Activated T-helper 2 cell treated with anti-CD3 and anti-CD28 coated beads, Interferon-gamma antibody, Interleukin-2, Interleukin-4, amounts not matched to agents 10 μg/mL and 5 μg/mL and 100 μg/mL, durations not matched to agents 14 hours and 24 hours and 36 hours (primary cell): ENCODE measurements at regions of chr16 and their contacts with region 1.

Region 1: DNA sequence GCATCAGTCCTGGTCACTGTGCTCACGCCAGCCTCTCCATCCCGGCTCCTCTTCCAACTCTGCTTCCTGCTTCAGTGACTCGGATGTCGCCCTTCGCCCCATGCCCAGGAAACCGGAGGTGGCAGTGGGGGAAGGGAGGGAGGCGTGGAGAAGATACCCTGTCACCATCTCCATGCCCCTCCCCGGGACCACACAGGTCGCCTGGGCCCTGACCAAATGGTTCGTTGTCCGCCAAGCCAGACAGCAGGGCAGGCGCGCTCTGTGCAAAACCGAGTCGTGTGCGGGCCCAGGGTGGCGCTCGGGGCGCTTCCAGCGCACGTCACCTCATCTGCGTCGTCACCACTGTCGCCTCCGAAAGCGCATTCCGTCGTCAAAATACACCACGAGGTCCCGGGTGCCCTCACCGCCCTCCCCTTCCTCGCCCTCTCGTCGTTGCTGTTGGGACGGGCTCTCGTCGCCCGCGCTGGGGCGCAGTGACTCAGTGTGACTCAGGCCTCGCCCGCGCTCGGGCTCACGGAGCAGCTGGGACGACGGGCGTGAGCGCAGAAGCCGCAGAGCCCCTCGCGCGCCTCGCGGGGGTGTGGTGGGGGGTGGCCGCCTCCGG is 39.2 kb downstream of the ZNF778 start:
- DNase-seq: peak; percentile 66
- H3K4me3 Mint-ChIP-seq: peak overlapping the region; percentile 31
- H3K27ac Mint-ChIP-seq: peak overlapping the region; percentile 42
- H3K4me1 Mint-ChIP-seq: peaks cover 11% of the 10 kb centered on the region
- H3K27me3 Mint-ChIP-seq: peaks cover 24% of the 10 kb centered on the region

Region 2: DNA sequence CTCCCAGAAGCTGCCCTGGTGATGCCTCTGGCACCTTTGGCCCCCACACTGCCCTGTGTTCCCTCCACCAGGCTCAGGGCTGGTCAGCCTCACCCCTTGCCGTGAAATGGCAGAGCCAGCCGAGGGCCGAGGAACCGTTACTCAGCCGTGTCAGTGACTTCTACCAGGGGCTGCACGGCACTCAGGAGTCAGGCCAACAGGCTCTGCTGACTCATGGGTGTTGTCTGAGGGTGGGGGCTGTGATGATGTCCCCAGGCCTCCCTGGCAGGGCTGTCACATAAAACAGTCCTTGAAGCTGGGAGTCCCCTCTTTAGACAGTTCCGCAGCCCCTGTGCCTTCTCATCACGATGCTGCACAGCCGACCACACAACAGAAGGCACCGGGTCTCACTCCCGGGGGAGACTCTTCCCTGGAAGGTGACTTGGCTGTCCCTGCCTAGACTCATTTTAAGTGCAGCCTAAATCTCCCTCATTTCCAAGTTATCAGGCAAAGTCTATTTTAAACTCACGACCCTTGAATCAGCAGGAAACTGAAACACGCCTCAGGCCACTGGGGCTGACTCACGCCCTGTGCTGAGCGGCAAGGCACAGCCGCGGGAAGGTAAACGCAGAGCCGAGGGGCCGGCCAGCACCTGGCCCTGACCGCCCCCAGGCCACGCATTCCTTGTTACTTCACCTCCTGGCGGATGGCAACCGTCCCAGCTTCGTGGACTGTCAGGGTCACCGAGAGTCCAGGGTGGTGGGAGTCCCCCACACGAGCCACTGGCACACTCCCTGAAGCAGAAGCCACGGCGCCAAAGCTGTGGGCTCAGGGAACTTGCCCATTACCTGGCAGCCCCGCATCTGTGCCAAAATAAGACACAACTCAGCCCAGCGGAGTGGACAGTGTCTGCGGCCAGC is 63.4 kb after region 1 on chr16:
- intact Hi-C with region 1: loop called (anchors 10 kb)
- DNase-seq: no peak
- H3K4me3 Mint-ChIP-seq: no peak overlapping the region
- H3K27ac Mint-ChIP-seq: peak overlapping the region; percentile 48
- H3K4me1 Mint-ChIP-seq: peaks cover 79% of the 10 kb centered on the region
- H3K27me3 Mint-ChIP-seq: no peaks in the 10 kb centered on the region